Heart right ventricle (tissue), 16 donors: ENCODE measurements at regions of chr12 and their contacts with region 1.

Region 1: DNA sequence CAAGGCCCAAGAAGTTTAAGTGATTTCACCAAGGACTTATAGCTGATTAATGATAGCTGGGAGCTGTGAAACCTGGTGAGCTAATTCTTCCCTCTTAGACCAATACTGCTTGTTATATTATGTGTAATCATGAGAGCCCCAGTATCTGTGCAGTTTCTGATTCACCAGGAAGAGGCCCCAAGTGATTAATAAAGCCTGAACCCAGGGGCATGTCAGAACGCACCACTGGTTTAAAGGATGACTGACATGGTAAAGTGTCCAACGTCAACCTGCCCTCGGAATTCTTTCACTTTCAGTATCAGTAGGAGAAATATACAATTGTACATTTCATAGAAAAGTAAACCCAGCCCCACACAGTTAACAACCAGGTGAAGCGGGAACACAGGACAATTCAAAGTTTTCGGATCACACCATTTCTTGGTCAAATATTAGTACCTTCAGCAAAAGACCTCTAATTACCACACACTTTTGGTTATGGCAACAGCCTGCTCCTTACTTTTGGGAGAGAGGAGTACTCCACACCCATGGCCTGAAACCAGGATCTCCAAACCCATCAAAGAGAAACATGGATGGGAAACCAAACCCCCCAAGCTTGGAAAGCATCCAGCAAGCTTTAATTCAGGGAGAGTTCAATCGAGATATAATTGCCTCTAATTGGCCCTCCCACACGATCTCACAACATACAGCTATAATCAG is 28.5 kb downstream of the TMCC3 start:
- DNase-seq: no peak
- ATAC-seq: peak in 4 of 8 donors; percentile 32 to 64 (median 47)
- H3K4me3 ChIP-seq: peak overlapping the region in 6 of 10 donors; percentile 13 to 29 (median 18)
- H3K27ac ChIP-seq: peak overlapping the region in 7 of 10 donors; percentile 3 to 67 (median 52)
- H3K4me1 ChIP-seq: peaks cover 4 to 35% (median 23%) of the 10 kb centered on the region in 9 donors
- H3K27me3 ChIP-seq: no peaks in the 10 kb centered on the region
- CTCF ChIP-seq: no peak

Region 2: GRCh38 chr12:94289461-94290312 is 332.1 kb before region 1 on chr12:
- intact Hi-C with region 1: no loop called
- DNase-seq: no peak
- ATAC-seq: peak; percentile 46 to 76 (median 64)
- H3K4me3 ChIP-seq: peak overlapping the region in 1 of 10 donors; percentile 13
- H3K27ac ChIP-seq: peak overlapping the region; percentile 12 to 78 (median 66)
- H3K4me1 ChIP-seq: peaks cover 4 to 33% (median 23%) of the 10 kb centered on the region in 9 donors
- H3K27me3 ChIP-seq: no peaks in the 10 kb centered on the region
- CTCF ChIP-seq: no peak

Region 3: DNA sequence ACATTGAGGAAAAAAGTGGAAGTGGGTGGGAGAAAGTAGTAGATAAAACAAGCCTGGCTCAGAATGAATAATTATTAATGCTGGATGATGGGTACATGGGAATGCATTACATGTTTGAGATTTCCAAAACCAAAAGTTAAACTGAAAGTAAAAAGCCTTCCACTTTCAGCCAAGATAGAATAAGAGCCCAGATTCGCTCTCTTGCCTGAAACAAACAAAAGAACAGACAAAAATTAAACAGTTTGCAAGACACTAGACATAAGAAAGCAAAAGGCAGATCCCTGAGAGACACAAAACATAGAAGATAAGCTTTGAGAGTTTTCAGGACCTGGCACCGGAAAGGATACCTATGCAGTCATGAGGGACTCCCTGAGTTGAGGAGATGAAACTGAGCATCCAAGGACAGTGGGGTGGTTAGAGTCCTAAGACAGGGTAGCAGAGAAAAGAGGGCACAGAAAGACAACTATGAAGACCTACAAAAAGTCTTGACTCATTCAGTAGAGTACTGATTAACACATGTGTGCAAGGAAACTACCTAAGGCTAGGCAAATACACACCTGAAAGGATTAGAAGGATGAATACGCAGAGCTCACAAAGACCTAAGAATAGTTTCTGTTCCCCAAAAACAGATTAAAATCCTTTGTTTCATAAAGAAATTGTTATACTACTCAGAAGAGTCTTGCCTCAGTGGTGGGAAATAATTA is 216.2 kb before region 1 on chr12:
- intact Hi-C with region 1: no loop called
- DNase-seq: no peak
- ATAC-seq: no peak
- H3K4me3 ChIP-seq: peak overlapping the region in 7 of 10 donors; percentile 13 to 32 (median 29)
- H3K27ac ChIP-seq: peak overlapping the region in 6 of 10 donors; percentile 1 to 22 (median 18)
- H3K4me1 ChIP-seq: peaks cover 0 to 16% (median 6%) of the 10 kb centered on the region in 9 donors
- H3K27me3 ChIP-seq: no peaks in the 10 kb centered on the region
- CTCF ChIP-seq: no peak

Region 4: GRCh38 chr12:94586589-94587259 is 35.1 kb before region 1 on chr12:
- intact Hi-C with region 1: loop called in 1 of 10 experiments (anchors 5 kb)
- DNase-seq: no peak
- ATAC-seq: peak in 4 of 8 donors; percentile 17 to 39 (median 31)
- H3K4me3 ChIP-seq: no peak overlapping the region
- H3K27ac ChIP-seq: peak overlapping the region in 9 of 10 donors; percentile 25 to 89 (median 72)
- H3K4me1 ChIP-seq: peaks cover 0 to 40% (median 16%) of the 10 kb centered on the region in 9 donors
- H3K27me3 ChIP-seq: peaks cover 0 to 4% (median 0%) of the 10 kb centered on the region in 7 donors
- CTCF ChIP-seq: no peak